ENCODE measurements at regions of chr12 and their contacts with region 1.

Region 1: GRCh38 chr12:32051559-32052414 is 54.9 kb upstream of the BICD1 start:
- DNase-seq: peak; percentile 95
- ATAC-seq: peak; percentile 98
- H3K4me3 ChIP-seq: no peak overlapping the region
- H3K27ac ChIP-seq: peak overlapping the region; percentile 72
- H3K4me1 ChIP-seq: peaks cover 7% of the 10 kb centered on the region
- H3K27me3 ChIP-seq: no peaks in the 10 kb centered on the region
- CTCF ChIP-seq: no peak

Region 2: GRCh38 chr12:31651893-31652521 is 399.8 kb before region 1 on chr12:
- CTCF ChIA-PET with region 1: no interaction called
- POLR2A ChIA-PET with region 1: no interaction called
- intact Hi-C with region 1: loop called (anchors 2 kb)
- DNase-seq: no peak
- ATAC-seq: no peak
- H3K4me3 ChIP-seq: no peak overlapping the region
- H3K27ac ChIP-seq: no peak overlapping the region
- H3K4me1 ChIP-seq: peaks cover 9% of the 10 kb centered on the region
- H3K27me3 ChIP-seq: no peaks in the 10 kb centered on the region
- CTCF ChIP-seq: no peak

Region 3: GRCh38 chr12:32155961-32156529 is 104.3 kb after region 1 on chr12:
- CTCF ChIA-PET with region 1: no interaction called
- POLR2A ChIA-PET with region 1: no interaction called
- intact Hi-C with region 1: no loop called
- DNase-seq: no peak
- ATAC-seq: no peak
- H3K4me3 ChIP-seq: no peak overlapping the region
- H3K27ac ChIP-seq: no peak overlapping the region
- H3K4me1 ChIP-seq: no peaks in the 10 kb centered on the region
- H3K27me3 ChIP-seq: no peaks in the 10 kb centered on the region
- CTCF ChIP-seq: no peak

Region 4: GRCh38 chr12:32181498-32182175 is 129.8 kb after region 1 on chr12:
- CTCF ChIA-PET with region 1: no interaction called
- POLR2A ChIA-PET with region 1: no interaction called
- intact Hi-C with region 1: no loop called
- DNase-seq: no peak
- ATAC-seq: no peak
- H3K4me3 ChIP-seq: no peak overlapping the region
- H3K27ac ChIP-seq: no peak overlapping the region
- H3K4me1 ChIP-seq: peaks cover 32% of the 10 kb centered on the region
- H3K27me3 ChIP-seq: no peaks in the 10 kb centered on the region
- CTCF ChIP-seq: no peak